Endothelial cell of umbilical vein (primary cell): ENCODE measurements at regions of chr17 and their contacts with region 1.

Region 1: DNA sequence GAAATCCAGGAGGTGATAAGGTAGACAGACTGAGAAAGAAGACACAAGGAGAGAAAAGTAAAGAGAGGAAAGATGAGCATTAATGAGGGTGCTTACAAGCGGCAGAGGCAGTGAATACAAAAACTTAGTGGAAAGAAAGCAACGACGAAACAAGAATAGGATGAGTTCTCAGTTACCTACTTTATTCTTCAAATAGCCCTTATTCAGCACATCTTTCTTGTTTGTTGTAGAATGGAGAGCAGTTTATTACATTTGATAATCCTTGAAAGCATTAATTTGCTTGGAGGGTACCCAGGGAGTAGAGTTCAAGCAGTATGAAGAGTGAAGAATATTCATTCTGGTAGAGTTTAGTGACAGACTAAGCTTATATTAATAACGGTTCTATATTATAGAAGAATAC is 22.4 kb downstream of the PAFAH1B1 start:
- DNase-seq: no peak
- H3K4me3 ChIP-seq: no peak overlapping the region
- H3K27ac ChIP-seq: no peak overlapping the region
- H3K4me1 ChIP-seq: no peaks in the 10 kb centered on the region
- H3K27me3 ChIP-seq: no peaks in the 10 kb centered on the region
- CTCF ChIP-seq: no peak
- POLR2A ChIP-seq: no peak

Region 2: DNA sequence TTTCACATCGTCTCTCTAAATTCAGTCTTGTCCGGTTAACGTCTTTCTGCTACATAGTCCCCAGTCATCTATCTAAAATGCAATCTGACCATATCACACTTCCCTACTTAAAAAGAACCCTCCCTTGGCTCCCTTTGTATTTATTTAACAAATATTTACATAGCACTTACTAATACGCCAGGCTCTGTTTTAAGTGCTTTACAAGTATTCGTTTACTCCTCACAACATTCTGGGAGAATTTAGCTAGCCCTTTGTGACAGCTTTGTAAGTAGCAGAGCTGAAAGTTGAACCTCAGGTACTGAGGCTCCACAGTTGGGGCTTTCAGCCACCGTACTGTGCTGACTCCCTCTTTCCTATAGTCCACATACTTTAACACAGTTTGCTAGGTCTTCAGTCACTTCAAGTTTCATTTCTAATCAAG is 13.3 kb before region 1 on chr17:
- CTCF ChIA-PET with region 1: no interaction called
- POLR2A ChIA-PET with region 1: no interaction called
- dilution Hi-C with region 1: no loop called
- intact Hi-C with region 1: loop called (anchors 1 kb)
- DNase-seq: peak; percentile 24
- H3K4me3 ChIP-seq: no peak overlapping the region
- H3K27ac ChIP-seq: peak overlapping the region; percentile 20
- H3K4me1 ChIP-seq: peaks cover 14% of the 10 kb centered on the region
- H3K27me3 ChIP-seq: no peaks in the 10 kb centered on the region
- CTCF ChIP-seq: no peak
- POLR2A ChIP-seq: no peak